HEK293 (cell line): ENCODE measurements at regions of chr9 and their contacts with region 1.

Region 1: GRCh38 chr9:128094166-128094967 is 26.3 kb downstream of the SLC25A25 start:
- H3K4me3 ChIP-seq: no peak overlapping the region
- H3K27ac ChIP-seq: no peak overlapping the region
- H3K4me1 ChIP-seq: 0 out of 2 replicates have a peak, but pooled peaks cover 4% of the 10 kb centered on the region
- CTCF ChIP-seq: no peak

Region 2: DNA sequence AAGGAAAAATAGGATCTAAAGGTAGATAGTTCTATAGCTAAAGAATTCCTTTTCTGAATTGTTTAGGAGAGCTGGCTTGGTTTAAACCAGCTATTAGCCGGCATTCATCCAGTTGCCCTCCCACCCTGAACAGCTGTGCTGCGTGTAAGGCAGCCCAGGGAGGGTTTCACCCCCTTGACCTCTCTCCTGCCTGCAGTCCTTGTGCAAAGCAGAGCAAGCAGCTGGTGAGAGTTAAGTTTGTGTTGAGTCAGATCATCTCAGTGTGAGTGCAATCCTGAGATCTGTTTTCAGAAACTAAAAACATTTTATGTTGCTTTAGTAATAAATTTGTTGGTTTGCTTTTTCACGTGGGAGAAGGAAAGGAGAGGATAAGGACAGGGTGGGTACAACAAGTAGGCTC is 13.3 kb before region 1 on chr9:
- CTCF ChIA-PET with region 1: interaction called, 13 read pairs
- POLR2A ChIA-PET with region 1: interaction called, 5 read pairs
- H3K4me3 ChIP-seq: no peak overlapping the region
- H3K27ac ChIP-seq: no peak overlapping the region
- H3K4me1 ChIP-seq: no peaks in the 10 kb centered on the region
- CTCF ChIP-seq: no peak

Region 3: DNA sequence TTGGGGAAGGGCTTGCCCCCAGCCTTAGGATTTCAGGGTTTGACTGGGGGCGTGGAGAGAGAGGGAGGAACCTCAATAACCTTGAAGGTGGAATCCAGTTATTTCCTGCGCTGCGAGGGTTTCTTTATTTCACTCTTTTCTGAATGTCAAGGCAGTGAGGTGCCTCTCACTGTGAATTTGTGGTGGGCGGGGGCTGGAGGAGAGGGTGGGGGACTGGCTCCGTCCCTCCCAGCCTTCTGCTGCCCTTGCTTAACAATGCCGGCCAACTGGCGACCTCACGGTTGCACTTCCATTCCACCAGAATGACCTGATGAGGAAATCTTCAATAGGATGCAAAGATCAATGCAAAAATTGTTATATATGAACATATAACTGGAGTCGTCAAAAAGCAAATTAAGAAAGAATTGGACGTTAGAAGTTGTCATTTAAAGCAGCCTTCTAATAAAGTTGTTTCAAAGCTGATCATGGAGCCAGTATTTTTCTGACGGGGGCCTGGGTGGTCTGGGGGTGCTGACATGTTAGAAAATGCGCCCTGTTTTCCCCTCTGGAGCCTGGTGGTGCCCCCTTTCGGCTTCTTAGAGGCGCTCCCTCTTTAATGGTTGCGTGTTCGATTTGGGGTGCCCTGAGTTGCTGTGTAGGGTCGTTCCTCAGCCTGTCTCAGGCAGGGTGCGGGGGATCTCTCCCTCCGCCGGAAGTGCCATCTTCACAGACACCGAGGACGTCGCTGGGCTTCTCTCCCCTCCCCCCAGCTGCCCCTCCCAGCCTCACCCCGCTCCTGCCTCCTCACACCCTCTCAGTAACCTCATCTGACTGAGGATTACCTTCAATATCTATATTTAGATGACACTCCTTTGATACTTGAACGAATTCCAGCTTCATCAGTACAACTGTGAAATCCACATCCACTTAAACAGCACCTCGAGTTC is 14.7 kb after region 1 on chr9:
- CTCF ChIA-PET with region 1: interaction called, 5 read pairs
- POLR2A ChIA-PET with region 1: interaction called, 14 read pairs
- H3K4me3 ChIP-seq: no peak overlapping the region
- H3K27ac ChIP-seq: no peak overlapping the region
- H3K4me1 ChIP-seq: no peaks in the 10 kb centered on the region
- CTCF ChIP-seq: no peak